ENCODE measurements at regions of chr9 and their contacts with region 1.

Region 1: DNA sequence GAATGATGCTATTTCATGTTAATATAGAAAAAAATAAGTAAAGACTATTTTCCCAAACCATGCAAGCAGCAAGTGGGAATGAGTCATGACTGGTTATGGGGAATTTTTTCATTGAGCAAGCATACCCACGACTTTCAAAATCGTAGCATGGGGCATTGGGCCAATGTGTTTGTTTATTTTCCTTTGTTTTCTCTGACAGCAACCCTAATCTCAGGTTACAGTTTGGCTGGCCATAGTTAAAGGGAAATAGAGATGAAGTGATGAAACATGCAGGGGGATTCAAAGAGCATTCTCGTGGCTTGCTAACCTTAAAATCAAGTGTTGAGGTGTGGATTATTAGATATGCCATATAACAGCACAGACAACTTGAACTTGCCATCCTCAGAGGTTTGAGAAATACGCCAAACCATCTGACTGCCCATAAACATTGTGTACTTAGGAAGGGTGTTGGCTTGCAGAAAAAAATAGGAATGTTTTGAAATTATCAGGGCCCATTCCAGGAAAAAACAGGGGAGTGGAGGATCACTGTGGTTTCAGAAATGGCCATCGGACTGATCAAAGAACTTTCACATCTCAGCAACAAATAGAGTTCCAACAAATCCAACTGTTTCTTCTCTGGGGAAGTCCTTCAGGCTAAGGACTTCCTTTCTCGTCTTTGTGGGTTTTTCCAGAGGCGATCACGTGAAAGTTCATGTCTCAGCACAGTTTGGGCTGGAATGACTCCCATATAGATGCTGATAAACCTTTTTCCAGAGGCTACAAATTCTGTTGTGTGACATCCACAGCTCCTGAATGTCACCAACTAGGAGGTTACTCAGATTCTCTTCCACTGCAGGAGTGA is 259.1 kb downstream of the SYK start:
- DNase-seq: no peak
- ATAC-seq: peak; percentile 54

Region 2: GRCh38 chr9:90999425-91000397 is 61.0 kb before region 1 on chr9:
- intact Hi-C with region 1: no loop called
- DNase-seq: no peak
- ATAC-seq: no peak

Region 3: GRCh38 chr9:91186518-91187108 is 125.9 kb after region 1 on chr9:
- intact Hi-C with region 1: loop called (anchors 5 kb)
- DNase-seq: no peak
- ATAC-seq: no peak